ENCODE measurements at regions of chr17 and their contacts with region 1.

Region 1: DNA sequence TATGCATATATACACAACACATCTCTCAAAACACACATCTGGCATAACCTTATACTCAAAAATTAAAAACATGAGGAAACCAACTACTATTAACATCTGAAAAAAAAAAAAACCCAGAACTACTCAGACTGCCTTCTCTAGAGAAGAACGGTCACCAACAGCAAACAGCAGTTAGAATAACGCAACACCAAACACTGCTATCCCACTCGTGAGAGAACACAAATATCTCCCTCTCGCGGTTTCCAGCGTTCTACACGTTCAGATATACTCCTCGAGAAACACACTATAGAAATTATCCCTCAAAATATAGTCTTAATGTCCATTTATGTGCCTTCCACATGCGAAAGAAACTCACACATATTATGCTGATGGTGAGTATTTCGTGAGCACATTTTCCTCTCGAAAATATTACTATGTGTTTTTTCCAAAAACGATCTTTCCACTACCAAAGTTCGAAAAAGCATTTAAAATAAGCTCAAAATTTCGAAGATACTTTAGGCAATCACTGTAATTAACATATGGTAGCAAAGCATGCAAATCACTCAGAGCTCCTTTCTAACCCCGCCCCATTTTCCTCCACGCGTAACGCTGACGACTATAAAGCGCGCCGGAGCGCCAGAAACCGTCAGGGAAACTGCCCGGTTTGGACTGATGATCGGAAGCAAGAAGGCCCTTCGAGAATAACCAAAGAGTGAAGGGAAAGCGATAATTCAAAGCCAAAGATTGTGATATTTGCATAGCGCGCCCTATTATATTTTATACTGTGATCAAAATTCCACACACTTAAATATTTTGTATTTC is 60.1 kb downstream of the TEX14 start:
- DNase-seq: peak; percentile 100
- ATAC-seq: peak; percentile 90
- H3K4me3 ChIP-seq: peak overlapping the region; percentile 39 to 48
- H3K27ac ChIP-seq: peak overlapping the region; percentile 80
- H3K4me1 ChIP-seq: peaks cover 11 to 18% of the 10 kb centered on the region in 2 experiments
- H3K27me3 ChIP-seq: no peaks in the 10 kb centered on the region
- CTCF ChIP-seq: peak in 2 of 3 experiments; percentile 7 to 16; a peak in 1 of 6 replicates
- POLR2A ChIP-seq: peak; percentile 100
- RAD21 ChIP-seq: peak; percentile 50

Region 2: GRCh38 chr17:58504826-58505521 is 126.7 kb before region 1 on chr17:
- CTCF ChIA-PET with region 1: no interaction called
- POLR2A ChIA-PET with region 1: no interaction called
- RAD21 ChIA-PET with region 1: no interaction called
- intact Hi-C with region 1: no loop called
- DNase-seq: no peak
- ATAC-seq: no peak
- H3K4me3 ChIP-seq: no peak overlapping the region
- H3K27ac ChIP-seq: no peak overlapping the region
- H3K4me1 ChIP-seq: no peaks in the 10 kb centered on the region
- H3K27me3 ChIP-seq: no peaks in the 10 kb centered on the region
- CTCF ChIP-seq: no peak
- POLR2A ChIP-seq: no peak
- RAD21 ChIP-seq: no peak

Region 3: DNA sequence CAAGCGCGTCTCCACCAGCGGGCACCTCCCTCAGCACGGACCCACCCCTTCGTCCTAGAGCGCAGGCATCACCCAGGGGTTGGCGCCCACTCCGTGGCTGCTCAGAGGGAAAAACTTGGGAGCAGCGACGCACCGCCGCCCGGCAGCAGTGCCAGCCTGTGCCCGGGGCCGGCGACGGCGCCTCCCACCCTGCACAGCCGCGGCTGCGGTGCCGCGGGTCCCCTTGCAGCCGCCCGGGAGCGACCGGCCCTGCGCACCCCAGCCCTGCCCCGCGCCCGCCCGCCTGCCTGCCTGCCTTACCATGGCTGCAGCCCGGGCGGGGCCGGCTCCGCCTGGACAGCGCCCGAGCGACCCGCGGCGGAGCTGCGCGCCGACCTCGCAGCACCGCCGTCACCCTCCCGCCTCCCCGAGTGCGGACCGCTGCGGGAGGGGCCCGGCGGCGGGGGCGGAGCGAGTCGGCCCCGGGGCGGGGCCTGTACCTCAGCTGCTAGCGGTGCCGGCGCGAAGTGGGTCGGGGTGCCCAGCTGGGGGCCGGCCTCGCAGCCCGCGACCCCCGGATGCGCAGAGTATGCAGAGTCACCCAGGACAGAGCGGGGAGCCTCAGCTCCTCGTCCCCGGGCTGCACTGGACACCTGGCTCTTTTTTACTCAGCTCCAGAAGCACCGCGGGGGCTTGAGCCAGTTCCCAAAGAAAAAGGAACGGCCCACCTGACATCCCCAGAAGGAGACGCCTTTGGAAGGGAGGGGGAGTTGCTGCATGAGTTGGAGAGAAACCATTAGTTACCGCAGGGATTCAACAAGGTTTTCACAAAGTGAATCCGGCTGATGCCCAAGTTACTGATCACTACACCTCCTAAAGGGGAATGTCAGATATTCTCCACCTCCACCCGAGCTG is 99.8 kb before region 1 on chr17:
- CTCF ChIA-PET with region 1: interaction called, 3 read pairs
- POLR2A ChIA-PET with region 1: interaction called, 33 read pairs
- RAD21 ChIA-PET with region 1: interaction called in 1 of 2 experiments, 3 read pairs
- intact Hi-C with region 1: no loop called
- DNase-seq: no peak
- ATAC-seq: peak; percentile 84
- H3K4me3 ChIP-seq: peak overlapping the region; percentile 34 to 56
- H3K27ac ChIP-seq: peak overlapping the region; percentile 14; the same call in 1 of the 2 replicates
- H3K4me1 ChIP-seq: peaks cover 25 to 46% of the 10 kb centered on the region in 2 experiments
- H3K27me3 ChIP-seq: no peaks in the 10 kb centered on the region; the same call in 1 of the 2 replicates
- CTCF ChIP-seq: no peak
- POLR2A ChIP-seq: no peak
- RAD21 ChIP-seq: no peak

Region 4: GRCh38 chr17:58587702-58588254 is 43.9 kb before region 1 on chr17:
- CTCF ChIA-PET with region 1: interaction called, 7 read pairs
- POLR2A ChIA-PET with region 1: interaction called, 92 read pairs
- RAD21 ChIA-PET with region 1: no interaction called
- intact Hi-C with region 1: loop called (anchors 1 kb)
- DNase-seq: peak; percentile 64
- ATAC-seq: peak; percentile 98
- H3K4me3 ChIP-seq: no peak overlapping the region
- H3K27ac ChIP-seq: no peak overlapping the region
- H3K4me1 ChIP-seq: no peaks in the 10 kb centered on the region
- H3K27me3 ChIP-seq: no peaks in the 10 kb centered on the region
- CTCF ChIP-seq: peak; percentile 80 to 100 (median 100); a peak in 5 of 6 replicates
- POLR2A ChIP-seq: no peak
- RAD21 ChIP-seq: peak; percentile 94

Region 5: GRCh38 chr17:58621174-58621573 is 10.5 kb before region 1 on chr17:
- CTCF ChIA-PET with region 1: no interaction called
- POLR2A ChIA-PET with region 1: interaction called, 45 read pairs
- RAD21 ChIA-PET with region 1: no interaction called
- intact Hi-C with region 1: no loop called
- DNase-seq: no peak
- ATAC-seq: no peak
- H3K4me3 ChIP-seq: no peak overlapping the region
- H3K27ac ChIP-seq: no peak overlapping the region
- H3K4me1 ChIP-seq: no peaks in the 10 kb centered on the region
- H3K27me3 ChIP-seq: no peaks in the 10 kb centered on the region
- CTCF ChIP-seq: no peak
- POLR2A ChIP-seq: no peak
- RAD21 ChIP-seq: no peak

Region 6: GRCh38 chr17:58679263-58680037 is 47.7 kb after region 1 on chr17:
- CTCF ChIA-PET with region 1: no interaction called
- POLR2A ChIA-PET with region 1: interaction called, 110 read pairs
- RAD21 ChIA-PET with region 1: no interaction called
- intact Hi-C with region 1: loop called (anchors 1 kb)
- DNase-seq: peak; percentile 100
- ATAC-seq: peak; percentile 90
- H3K4me3 ChIP-seq: no peak overlapping the region
- H3K27ac ChIP-seq: no peak overlapping the region
- H3K4me1 ChIP-seq: peaks cover 0 to 20% of the 10 kb centered on the region in 2 experiments; a peak in 2 of 4 replicates
- H3K27me3 ChIP-seq: no peaks in the 10 kb centered on the region
- CTCF ChIP-seq: peak in 2 of 3 experiments; percentile 4 to 34; a peak in 2 of 6 replicates
- POLR2A ChIP-seq: peak; percentile 100
- RAD21 ChIP-seq: 0 out of 2 replicates have a peak, but pooled peaks have one; percentile 38

Region 7: GRCh38 chr17:58822473-58823270 is 190.9 kb after region 1 on chr17:
- CTCF ChIA-PET with region 1: no interaction called
- POLR2A ChIA-PET with region 1: no interaction called
- RAD21 ChIA-PET with region 1: no interaction called
- intact Hi-C with region 1: no loop called
- DNase-seq: no peak
- ATAC-seq: no peak
- H3K4me3 ChIP-seq: no peak overlapping the region
- H3K27ac ChIP-seq: no peak overlapping the region
- H3K4me1 ChIP-seq: no peaks in the 10 kb centered on the region
- H3K27me3 ChIP-seq: no peaks in the 10 kb centered on the region
- CTCF ChIP-seq: no peak
- POLR2A ChIP-seq: no peak
- RAD21 ChIP-seq: no peak

Region 8: GRCh38 chr17:58885402-58886009 is 253.8 kb after region 1 on chr17:
- CTCF ChIA-PET with region 1: no interaction called
- POLR2A ChIA-PET with region 1: no interaction called
- RAD21 ChIA-PET with region 1: no interaction called
- intact Hi-C with region 1: no loop called
- DNase-seq: no peak
- ATAC-seq: no peak
- H3K4me3 ChIP-seq: no peak overlapping the region
- H3K27ac ChIP-seq: no peak overlapping the region
- H3K4me1 ChIP-seq: no peaks in the 10 kb centered on the region
- H3K27me3 ChIP-seq: no peaks in the 10 kb centered on the region
- CTCF ChIP-seq: no peak
- POLR2A ChIP-seq: no peak
- RAD21 ChIP-seq: no peak

Region 9: GRCh38 chr17:59155439-59156182 is 523.9 kb after region 1 on chr17 and contains the start of gene PRR11:
- CTCF ChIA-PET with region 1: no interaction called
- POLR2A ChIA-PET with region 1: interaction called, 11 read pairs
- RAD21 ChIA-PET with region 1: no interaction called
- intact Hi-C with region 1: no loop called
- DNase-seq: peak; percentile 100
- ATAC-seq: peak; percentile 87
- H3K4me3 ChIP-seq: peak within 1 kb of the TSS; percentile 71 to 80
- H3K27ac ChIP-seq: peak within 1 kb of the TSS; percentile 90
- H3K4me1 ChIP-seq: peaks cover 31 to 46% of the 10 kb centered on the region in 2 experiments
- H3K27me3 ChIP-seq: no peaks in the 10 kb centered on the region
- CTCF ChIP-seq: no peak
- POLR2A ChIP-seq: no peak
- RAD21 ChIP-seq: no peak
- total RNA-seq, gene PRR11: 86.7 TPM